Tibial artery (tissue), 4 donors: ENCODE measurements at regions of chr2 and their contacts with region 1.

Region 1: GRCh38 chr2:142974288-142975024 is 97.0 kb downstream of the KYNU start:
- DNase-seq: no peak
- H3K4me3 ChIP-seq: no peak overlapping the region
- H3K27ac ChIP-seq: no peak overlapping the region
- H3K4me1 ChIP-seq: peaks cover 0 to 7% (median 2%) of the 10 kb centered on the region in 4 donors
- H3K27me3 ChIP-seq: no peaks in the 10 kb centered on the region
- CTCF ChIP-seq: no peak

Region 2: GRCh38 chr2:142682528-142682927 is 291.9 kb before region 1 on chr2:
- intact Hi-C with region 1: loop called (anchors 5 kb)
- DNase-seq: no peak
- H3K4me3 ChIP-seq: no peak overlapping the region
- H3K27ac ChIP-seq: no peak overlapping the region
- H3K4me1 ChIP-seq: no peaks in the 10 kb centered on the region
- H3K27me3 ChIP-seq: no peaks in the 10 kb centered on the region
- CTCF ChIP-seq: peak in 1 of 2 experiments; percentile 20